H1 (cell line): ENCODE measurements at regions of chr12 and their contacts with region 1.

Region 1: GRCh38 chr12:63843721-63844390 is 644 bp upstream of the SRGAP1 start:
- DNase-seq: peak; percentile 90 to 91
- H3K4me3 ChIP-seq: peak overlapping the region; percentile 73 to 92 (median 83)
- H3K27ac ChIP-seq: no peak overlapping the region
- H3K4me1 ChIP-seq: peaks cover 0 to 5% (median under 1%) of the 10 kb centered on the region in 4 experiments; a peak in 1 of 7 replicates
- H3K27me3 ChIP-seq: peaks cover 0 to 4% (median 2%) of the 10 kb centered on the region in 4 experiments; a peak in 2 of 7 replicates
- CTCF ChIP-seq: peak; percentile 87 to 99 (median 88)
- EP300 ChIP-seq: no peak
- POLR2A ChIP-seq: peak in 1 of 2 experiments; percentile 53; a peak in 1 of 3 replicates
- RAD21 ChIP-seq: peak; percentile 85 to 92

Region 2: DNA sequence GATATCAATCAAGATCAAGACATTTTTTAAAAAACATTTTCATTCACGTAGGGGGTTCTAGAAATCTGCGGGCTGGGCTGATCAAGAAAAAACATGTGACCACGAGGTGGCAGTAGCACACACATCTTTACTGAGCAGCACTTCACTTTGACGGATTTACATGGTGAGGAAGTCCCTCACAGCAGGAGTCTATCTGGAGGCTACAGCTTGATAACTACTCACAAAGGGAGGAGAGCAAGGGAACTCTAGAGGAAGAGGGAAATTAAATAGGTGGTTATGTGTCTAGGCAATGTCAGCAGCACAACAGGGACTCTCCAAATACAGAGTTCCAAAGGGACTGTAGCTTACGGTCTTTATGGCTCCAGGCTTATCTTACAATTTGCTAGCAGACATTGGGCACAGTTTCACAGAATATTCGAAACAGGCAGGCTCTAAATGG is 423.6 kb before region 1 on chr12:
- CTCF ChIA-PET with region 1: no interaction called
- POLR2A ChIA-PET with region 1: no interaction called
- DNase-seq: peak; percentile 58 to 82
- H3K4me3 ChIP-seq: 0 out of 8 replicates have a peak overlapping the region, but pooled peaks of 1 of the 4 experiments have one; percentile 28
- H3K27ac ChIP-seq: no peak overlapping the region
- H3K4me1 ChIP-seq: peaks cover 0 to 7% (median 0%) of the 10 kb centered on the region in 4 experiments; a peak in 2 of 7 replicates
- H3K27me3 ChIP-seq: no peaks in the 10 kb centered on the region
- CTCF ChIP-seq: peak; percentile 43 to 79 (median 72)
- EP300 ChIP-seq: no peak
- POLR2A ChIP-seq: no peak
- RAD21 ChIP-seq: peak; percentile 82 to 88

Region 3: GRCh38 chr12:63853978-63854377 is 10.1 kb after region 1 on chr12:
- CTCF ChIA-PET with region 1: interaction called, 10 read pairs
- POLR2A ChIA-PET with region 1: interaction called, 9 read pairs
- DNase-seq: no peak
- H3K4me3 ChIP-seq: no peak overlapping the region
- H3K27ac ChIP-seq: no peak overlapping the region
- H3K4me1 ChIP-seq: peaks cover 0 to 2% (median 0%) of the 10 kb centered on the region in 4 experiments; a peak in 1 of 7 replicates
- H3K27me3 ChIP-seq: no peaks in the 10 kb centered on the region
- CTCF ChIP-seq: no peak
- EP300 ChIP-seq: no peak
- POLR2A ChIP-seq: no peak
- RAD21 ChIP-seq: no peak

Region 4: GRCh38 chr12:64181504-64182291 is 337.8 kb after region 1 on chr12:
- CTCF ChIA-PET with region 1: interaction called, 17 read pairs
- POLR2A ChIA-PET with region 1: interaction called, 3 read pairs
- DNase-seq: no peak
- H3K4me3 ChIP-seq: no peak overlapping the region
- H3K27ac ChIP-seq: no peak overlapping the region
- H3K4me1 ChIP-seq: no peaks in the 10 kb centered on the region; a peak in 1 of 7 replicates
- H3K27me3 ChIP-seq: no peaks in the 10 kb centered on the region
- CTCF ChIP-seq: peak; percentile 15 to 70 (median 67)
- EP300 ChIP-seq: no peak
- POLR2A ChIP-seq: no peak
- RAD21 ChIP-seq: peak; percentile 77 to 81

Region 5: DNA sequence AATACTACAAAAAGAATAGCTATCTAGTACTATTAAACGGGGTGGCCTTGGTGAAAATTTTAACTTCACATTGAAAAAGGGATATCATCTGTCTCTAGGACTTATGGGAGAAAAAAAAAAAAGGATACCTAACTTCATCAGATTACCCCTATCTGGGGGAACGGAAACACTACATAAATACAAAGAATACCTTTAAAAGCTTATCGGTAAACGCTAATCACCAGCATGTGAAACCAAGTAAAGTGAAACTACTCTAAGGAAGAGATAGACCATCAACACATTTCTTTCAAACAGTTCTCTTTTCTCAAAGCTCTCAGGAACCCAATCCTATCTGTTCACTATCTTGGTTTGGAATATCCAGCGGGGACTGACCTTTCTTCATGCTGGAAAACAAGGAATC is 374.7 kb after region 1 on chr12:
- CTCF ChIA-PET with region 1: interaction called, 12 read pairs
- POLR2A ChIA-PET with region 1: no interaction called
- DNase-seq: no peak
- H3K4me3 ChIP-seq: no peak overlapping the region
- H3K27ac ChIP-seq: no peak overlapping the region
- H3K4me1 ChIP-seq: peaks cover 0 to 10% (median 3%) of the 10 kb centered on the region in 4 experiments; a peak in 5 of 7 replicates
- H3K27me3 ChIP-seq: no peaks in the 10 kb centered on the region
- CTCF ChIP-seq: no peak
- EP300 ChIP-seq: no peak
- POLR2A ChIP-seq: no peak
- RAD21 ChIP-seq: no peak

Region 6: DNA sequence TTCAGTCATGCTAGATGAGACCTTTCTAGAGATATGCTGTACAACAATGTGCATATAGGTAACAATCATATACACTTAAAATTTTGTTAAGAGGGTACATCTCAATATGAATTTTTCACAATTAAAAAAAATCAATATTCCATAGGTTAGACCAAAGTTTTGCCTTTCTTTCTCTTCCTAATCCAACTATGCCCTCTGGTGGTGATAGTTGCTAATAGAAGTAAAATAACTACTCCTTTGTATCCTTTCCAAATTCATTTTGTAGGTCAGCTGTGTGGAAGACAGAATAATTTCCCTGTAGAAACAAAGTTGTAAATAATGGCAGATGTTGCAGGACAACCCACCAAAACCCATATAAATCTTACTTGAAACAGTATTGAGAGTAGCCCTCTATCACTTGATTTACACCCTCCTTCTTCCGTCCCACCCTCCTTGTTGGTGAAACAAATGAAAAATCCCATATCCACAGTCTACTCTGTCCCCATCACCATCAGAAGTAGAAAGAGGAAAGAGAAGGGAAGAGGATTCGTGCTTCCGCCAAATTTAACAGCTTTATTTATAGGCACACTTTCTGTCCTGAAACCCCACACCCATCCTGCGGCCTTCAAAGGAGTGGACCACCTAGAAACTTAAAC is 412.4 kb after region 1 on chr12:
- CTCF ChIA-PET with region 1: interaction called, 67 read pairs
- POLR2A ChIA-PET with region 1: no interaction called
- DNase-seq: no peak
- H3K4me3 ChIP-seq: no peak overlapping the region
- H3K27ac ChIP-seq: no peak overlapping the region
- H3K4me1 ChIP-seq: peaks cover 0 to 2% (median 0%) of the 10 kb centered on the region in 4 experiments; a peak in 1 of 7 replicates
- H3K27me3 ChIP-seq: no peaks in the 10 kb centered on the region
- CTCF ChIP-seq: peak in 2 of 3 experiments; percentile 40 to 49; a peak in 2 of 4 replicates
- EP300 ChIP-seq: no peak
- POLR2A ChIP-seq: no peak
- RAD21 ChIP-seq: peak; percentile 76 to 90